Activated CD8-positive, alpha-beta T cell treated with anti-CD3 and anti-CD28 coated beads for 36 hours (primary cell): ENCODE measurements at regions of chr2 and their contacts with region 1.

Region 1: DNA sequence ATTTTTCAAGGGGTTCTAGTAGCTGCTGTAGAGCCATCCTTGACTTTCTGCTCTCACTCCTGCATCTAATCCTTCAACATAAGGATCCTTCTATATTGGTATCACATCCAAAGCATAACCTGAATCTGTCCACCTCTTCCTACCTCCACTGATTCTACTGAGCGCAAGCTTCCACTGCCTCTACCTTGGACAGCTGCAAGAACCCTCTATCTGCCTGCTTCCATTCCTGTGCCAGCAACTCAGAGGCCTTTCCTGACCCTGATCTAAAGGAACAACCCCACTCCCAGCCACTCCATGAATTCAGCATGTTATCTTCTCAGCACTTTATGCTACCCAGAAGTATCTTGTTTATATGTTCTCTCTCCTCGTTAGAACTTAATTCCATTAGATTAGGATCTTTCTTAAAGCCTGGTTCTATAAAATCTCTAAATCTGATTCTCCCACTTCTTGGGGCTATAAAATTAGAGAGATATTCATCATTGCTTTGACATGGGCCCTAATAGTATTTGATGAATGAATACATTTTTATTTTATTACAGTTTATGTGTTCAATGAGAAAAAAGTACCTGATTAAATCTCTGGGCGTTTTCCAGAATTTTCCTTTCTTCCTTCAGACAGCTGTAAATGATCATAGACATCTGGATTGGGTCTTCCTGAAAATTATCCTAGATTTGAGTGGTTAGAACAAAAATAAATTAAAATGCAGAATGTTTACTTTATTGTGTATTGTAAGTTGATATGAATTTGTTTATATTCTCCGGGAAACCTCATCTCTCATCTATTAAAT is 6.8 kb downstream of the STAT1 start:
- DNase-seq: no peak
- ATAC-seq: no peak
- H3K4me3 Mint-ChIP-seq: no peak overlapping the region
- H3K27ac Mint-ChIP-seq: peak overlapping the region; percentile 41
- H3K4me1 Mint-ChIP-seq: peaks cover 69% of the 10 kb centered on the region
- H3K27me3 Mint-ChIP-seq: no peaks in the 10 kb centered on the region
- CTCF ChIP-seq: no peak

Region 2: GRCh38 chr2:190670182-190670946 is 336.8 kb before region 1 on chr2:
- CTCF ChIA-PET with region 1: no interaction called
- POLR2A ChIA-PET with region 1: no interaction called
- intact Hi-C with region 1: no loop called
- DNase-seq: no peak
- ATAC-seq: peak; percentile 49
- H3K4me3 Mint-ChIP-seq: no peak overlapping the region
- H3K27ac Mint-ChIP-seq: no peak overlapping the region
- H3K4me1 Mint-ChIP-seq: peaks cover 31% of the 10 kb centered on the region
- H3K27me3 Mint-ChIP-seq: no peaks in the 10 kb centered on the region
- CTCF ChIP-seq: no peak

Region 3: GRCh38 chr2:190996338-190996946 is 10.7 kb before region 1 on chr2:
- CTCF ChIA-PET with region 1: interaction called, 8 read pairs
- POLR2A ChIA-PET with region 1: interaction called, 144 read pairs
- intact Hi-C with region 1: no loop called
- DNase-seq: peak; percentile 42
- ATAC-seq: peak; percentile 49
- H3K4me3 Mint-ChIP-seq: no peak overlapping the region
- H3K27ac Mint-ChIP-seq: peak overlapping the region; percentile 65
- H3K4me1 Mint-ChIP-seq: peaks cover 58% of the 10 kb centered on the region
- H3K27me3 Mint-ChIP-seq: no peaks in the 10 kb centered on the region
- CTCF ChIP-seq: peak; percentile 41